Activated CD4-positive, alpha-beta T cell treated with anti-CD3 and anti-CD28 coated beads for 36 hours (primary cell): ENCODE measurements at regions of chr7 and their contacts with region 1.

Region 1: DNA sequence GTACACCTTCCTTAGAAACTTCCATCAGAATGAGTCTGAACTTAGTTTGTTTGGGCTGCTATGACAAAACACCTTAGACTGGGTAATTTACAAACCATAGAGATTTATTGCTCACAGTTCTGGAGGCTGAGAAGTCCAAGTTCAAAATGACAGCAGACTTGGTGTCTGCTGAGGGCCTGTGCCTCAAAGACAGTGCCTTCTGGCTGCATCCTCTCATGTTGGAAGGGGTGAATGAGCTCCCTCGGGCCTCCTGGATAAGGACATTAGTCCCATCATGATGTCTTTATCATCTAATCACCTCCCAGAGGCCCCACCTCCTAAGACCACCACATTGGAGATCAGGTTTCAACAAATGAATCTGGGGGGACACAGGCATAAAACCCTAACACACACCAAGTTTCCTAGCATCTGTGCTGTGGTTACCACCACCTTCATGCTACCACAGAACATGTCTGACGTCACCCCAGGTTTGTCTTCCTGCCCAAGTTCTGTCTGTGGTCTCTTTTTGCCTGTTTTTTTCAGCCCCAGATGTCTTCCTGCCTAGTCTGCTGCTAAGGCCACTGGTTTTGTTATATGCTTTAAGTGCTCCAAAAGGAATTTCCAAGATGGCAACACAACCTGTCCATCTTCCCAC is 150.9 kb upstream of the COBL start:
- DNase-seq: peak; percentile 37
- ATAC-seq: peak; percentile 63
- H3K4me3 Mint-ChIP-seq: no peak overlapping the region
- H3K27ac Mint-ChIP-seq: peak overlapping the region; percentile 4
- H3K4me1 Mint-ChIP-seq: peaks cover 19% of the 10 kb centered on the region
- H3K27me3 Mint-ChIP-seq: peaks cover 10% of the 10 kb centered on the region

Region 2: GRCh38 chr7:51444936-51445335 is 22.6 kb before region 1 on chr7:
- CTCF ChIA-PET with region 1: no interaction called
- POLR2A ChIA-PET with region 1: interaction called, 10 read pairs
- intact Hi-C with region 1: no loop called
- DNase-seq: no peak
- ATAC-seq: no peak
- H3K4me3 Mint-ChIP-seq: no peak overlapping the region
- H3K27ac Mint-ChIP-seq: no peak overlapping the region
- H3K4me1 Mint-ChIP-seq: no peaks in the 10 kb centered on the region
- H3K27me3 Mint-ChIP-seq: peaks cover 5% of the 10 kb centered on the region

Region 3: GRCh38 chr7:52140851-52141250 is 673.4 kb after region 1 on chr7:
- CTCF ChIA-PET with region 1: no interaction called
- POLR2A ChIA-PET with region 1: no interaction called
- intact Hi-C with region 1: no loop called
- DNase-seq: no peak
- ATAC-seq: no peak
- H3K4me3 Mint-ChIP-seq: no peak overlapping the region
- H3K27ac Mint-ChIP-seq: no peak overlapping the region
- H3K4me1 Mint-ChIP-seq: no peaks in the 10 kb centered on the region
- H3K27me3 Mint-ChIP-seq: no peaks in the 10 kb centered on the region